BJ (cell line): ENCODE measurements at regions of chr16 and their contacts with region 1.

Region 1: DNA sequence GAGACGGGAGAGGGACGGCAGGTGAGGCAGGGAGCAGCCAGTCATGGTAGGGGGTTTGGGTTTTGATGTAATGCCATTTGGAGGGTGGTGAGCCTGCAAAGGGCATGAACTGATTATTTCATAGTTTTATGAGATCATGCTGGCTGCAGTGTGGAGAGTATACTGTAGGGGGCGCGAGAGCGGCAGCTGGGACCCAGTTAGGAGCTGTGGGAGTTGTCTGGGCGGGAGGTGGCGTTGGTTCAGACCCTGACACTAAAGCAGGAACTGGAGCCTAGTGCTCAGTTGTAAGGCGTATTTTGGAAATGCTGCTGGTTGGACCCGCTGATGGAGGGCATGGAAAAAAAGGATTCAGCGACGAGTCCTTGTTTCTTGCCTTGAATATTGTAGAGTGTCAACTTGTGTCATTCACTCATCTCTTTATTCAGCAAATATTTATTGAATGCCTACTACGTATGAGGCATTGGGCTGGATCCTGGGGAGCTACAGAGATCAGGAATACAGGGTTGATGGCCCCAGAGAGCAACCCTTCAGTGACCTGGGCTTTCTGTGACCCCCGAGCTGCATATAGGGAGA is 23.7 kb upstream of the KDM8 start:
- DNase-seq: no peak
- H3K4me3 ChIP-seq: no peak overlapping the region
- H3K27me3 ChIP-seq: peaks cover 3% of the 10 kb centered on the region; the same call in 1 of the 2 replicates
- CTCF ChIP-seq: peak; percentile 81

Region 2: DNA sequence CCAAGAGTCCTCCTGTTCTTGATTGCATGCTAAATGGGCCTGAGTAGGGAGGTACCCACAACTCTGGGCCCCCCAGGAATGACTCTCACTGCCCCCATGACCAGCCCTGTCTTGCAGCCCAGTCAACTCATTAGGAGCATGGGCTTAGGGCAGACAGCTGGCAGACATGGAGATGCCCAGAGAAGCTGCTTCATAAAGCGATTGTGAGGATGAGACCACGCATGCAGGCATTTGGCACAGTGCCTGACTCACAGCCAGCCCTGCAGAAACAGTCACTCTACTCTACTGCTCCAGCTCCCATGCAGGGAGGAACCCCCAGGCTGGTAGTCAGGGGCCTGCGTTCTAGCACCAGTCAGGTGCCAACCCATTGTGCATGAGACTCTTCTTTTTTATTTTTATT is 121.3 kb before region 1 on chr16:
- CTCF ChIA-PET with region 1: no interaction called
- POLR2A ChIA-PET with region 1: no interaction called
- DNase-seq: no peak
- H3K4me3 ChIP-seq: no peak overlapping the region
- H3K27me3 ChIP-seq: no peaks in the 10 kb centered on the region
- CTCF ChIP-seq: no peak

Region 3: GRCh38 chr16:27164352-27164751 is 15.2 kb before region 1 on chr16:
- CTCF ChIA-PET with region 1: interaction called, 30 read pairs
- POLR2A ChIA-PET with region 1: no interaction called
- DNase-seq: no peak
- H3K4me3 ChIP-seq: no peak overlapping the region
- H3K27me3 ChIP-seq: no peaks in the 10 kb centered on the region; the same call in 1 of the 2 replicates
- CTCF ChIP-seq: no peak

Region 4: GRCh38 chr16:27203429-27204231 is 24.0 kb after region 1 on chr16 and contains the start of gene KDM8:
- CTCF ChIA-PET with region 1: interaction called, 13 read pairs
- POLR2A ChIA-PET with region 1: no interaction called
- DNase-seq: peak; percentile 99
- H3K4me3 ChIP-seq: peak within 1 kb of the TSS; percentile 83
- H3K27me3 ChIP-seq: no peaks in the 10 kb centered on the region; the same call in 1 of the 2 replicates
- CTCF ChIP-seq: no peak
- polyA plus RNA-seq, gene KDM8: 2.0 and 3.7 TPM in 2 replicates

Region 5: GRCh38 chr16:27401768-27402568 is 222.4 kb after region 1 on chr16 and contains the start of gene IL21R:
- CTCF ChIA-PET with region 1: no interaction called
- POLR2A ChIA-PET with region 1: no interaction called
- DNase-seq: peak; percentile 26
- H3K4me3 ChIP-seq: no peak within 1 kb of the TSS
- H3K27me3 ChIP-seq: no peaks in the 10 kb centered on the region
- CTCF ChIP-seq: no peak
- polyA plus RNA-seq, gene IL21R: 0.33 and 0.58 TPM in 2 replicates